BJ (cell line): ENCODE measurements at regions of chr1 and their contacts with region 1.

Region 1: DNA sequence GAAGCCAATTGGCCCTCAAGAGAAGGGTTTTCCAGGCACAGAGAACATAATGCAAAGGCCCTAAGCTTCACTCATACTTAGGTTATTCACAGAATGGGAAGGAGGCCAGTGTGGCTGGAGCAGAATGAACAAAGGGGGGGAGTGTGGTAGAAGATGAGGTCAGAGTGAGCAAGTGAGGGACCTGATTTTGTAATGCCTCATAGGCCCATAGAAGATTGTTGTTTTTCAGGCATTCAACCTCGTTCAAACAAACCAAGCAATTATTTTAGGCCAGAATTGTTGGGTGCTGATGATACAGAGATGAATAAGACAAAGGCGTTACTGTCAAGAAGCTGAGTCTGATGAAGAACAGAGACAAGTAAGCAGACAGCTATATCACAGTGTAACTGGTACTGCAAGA is 54.5 kb upstream of the RAP1A start:
- DNase-seq: no peak
- H3K4me3 ChIP-seq: no peak overlapping the region
- H3K27me3 ChIP-seq: no peaks in the 10 kb centered on the region
- CTCF ChIP-seq: no peak

Region 2: DNA sequence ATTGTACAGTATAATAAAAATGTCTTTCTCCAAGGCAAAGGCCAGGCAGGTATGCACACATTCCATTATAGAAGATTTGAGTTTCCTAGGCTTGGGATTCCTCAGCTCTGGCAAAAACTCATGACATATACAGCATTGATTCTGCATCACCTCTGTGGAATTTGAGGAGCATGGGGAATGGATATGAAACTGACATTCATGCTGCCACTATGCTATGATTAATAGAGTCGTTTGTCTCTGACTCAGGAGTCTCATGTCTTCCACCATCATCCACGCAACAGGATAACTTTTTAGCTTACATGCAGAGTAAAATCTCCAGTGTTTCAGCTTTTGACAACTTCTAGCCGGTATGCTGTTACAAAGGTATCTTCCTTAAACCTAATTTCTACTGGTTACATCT is 11.9 kb before region 1 on chr1:
- CTCF ChIA-PET with region 1: interaction called, 6 read pairs
- POLR2A ChIA-PET with region 1: interaction called, 11 read pairs
- DNase-seq: peak; percentile 84
- H3K4me3 ChIP-seq: no peak overlapping the region
- H3K27me3 ChIP-seq: no peaks in the 10 kb centered on the region
- CTCF ChIP-seq: no peak